ENCODE measurements at regions of chr2 and their contacts with region 1.

Region 1: GRCh38 chr2:180125245-180125962 is 118.3 kb upstream of the CWC22 start:
- DNase-seq: no peak
- H3K4me3 ChIP-seq: no peak overlapping the region
- H3K27ac ChIP-seq: no peak overlapping the region
- H3K4me1 ChIP-seq: peaks cover 5 to 20% (median 9%) of the 10 kb centered on the region in 3 donors
- H3K27me3 ChIP-seq: no peaks in the 10 kb centered on the region
- CTCF ChIP-seq: peak; percentile 28 to 61 (median 56)
- POLR2A ChIP-seq: no peak

Region 2: GRCh38 chr2:180184506-180184905 is 59.1 kb after region 1 on chr2:
- intact Hi-C with region 1: no loop called
- DNase-seq: no peak
- H3K4me3 ChIP-seq: no peak overlapping the region
- H3K27ac ChIP-seq: no peak overlapping the region
- H3K4me1 ChIP-seq: no peaks in the 10 kb centered on the region
- H3K27me3 ChIP-seq: no peaks in the 10 kb centered on the region
- CTCF ChIP-seq: no peak
- POLR2A ChIP-seq: no peak

Region 3: GRCh38 chr2:181466661-181467576 is 1341.5 kb after region 1 on chr2:
- intact Hi-C with region 1: loop called (anchors 10 kb)
- DNase-seq: no peak
- H3K4me3 ChIP-seq: no peak overlapping the region
- H3K27ac ChIP-seq: no peak overlapping the region
- H3K4me1 ChIP-seq: no peaks in the 10 kb centered on the region
- H3K27me3 ChIP-seq: no peaks in the 10 kb centered on the region
- CTCF ChIP-seq: peak; percentile 58 to 84 (median 68)
- POLR2A ChIP-seq: no peak

Region 4: DNA sequence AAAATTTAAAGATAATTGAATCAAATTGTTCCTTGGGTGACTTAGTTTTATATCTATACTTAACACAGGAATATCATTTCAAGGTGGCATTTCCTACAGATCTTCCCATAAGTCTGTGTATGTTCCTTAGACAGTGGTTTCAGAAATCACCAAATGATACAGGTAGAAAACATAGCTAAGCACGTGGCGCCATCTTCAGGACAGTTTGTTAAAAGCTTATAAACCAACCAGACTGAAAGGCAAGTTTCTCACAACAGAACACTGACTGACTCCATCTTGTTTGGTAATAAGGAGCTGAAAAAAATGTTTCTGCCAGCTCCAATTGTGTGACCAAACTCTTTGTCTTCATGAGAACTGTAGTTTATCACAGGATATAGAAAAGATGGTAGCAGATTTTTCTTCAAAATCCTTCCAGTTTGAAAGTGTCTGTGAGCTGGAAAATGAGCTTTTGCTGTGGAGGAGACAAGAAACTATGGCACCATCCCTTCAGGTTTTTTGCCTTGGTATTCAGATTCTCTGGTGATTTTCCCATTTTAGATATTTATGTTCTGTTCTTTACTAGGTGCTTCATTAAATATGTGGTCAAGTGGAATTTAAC is 1589.7 kb after region 1 on chr2:
- intact Hi-C with region 1: loop called (anchors 10 kb)
- DNase-seq: no peak
- H3K4me3 ChIP-seq: no peak overlapping the region
- H3K27ac ChIP-seq: no peak overlapping the region
- H3K4me1 ChIP-seq: no peaks in the 10 kb centered on the region
- H3K27me3 ChIP-seq: no peaks in the 10 kb centered on the region
- CTCF ChIP-seq: peak in 5 of 6 experiments; percentile 49 to 67 (median 56)
- POLR2A ChIP-seq: no peak

Measured in esophagus squamous epithelium (tissue), 5 donors.